MCF 10A (cell line): ENCODE measurements at regions of chr6 and their contacts with region 1.

Region 1: DNA sequence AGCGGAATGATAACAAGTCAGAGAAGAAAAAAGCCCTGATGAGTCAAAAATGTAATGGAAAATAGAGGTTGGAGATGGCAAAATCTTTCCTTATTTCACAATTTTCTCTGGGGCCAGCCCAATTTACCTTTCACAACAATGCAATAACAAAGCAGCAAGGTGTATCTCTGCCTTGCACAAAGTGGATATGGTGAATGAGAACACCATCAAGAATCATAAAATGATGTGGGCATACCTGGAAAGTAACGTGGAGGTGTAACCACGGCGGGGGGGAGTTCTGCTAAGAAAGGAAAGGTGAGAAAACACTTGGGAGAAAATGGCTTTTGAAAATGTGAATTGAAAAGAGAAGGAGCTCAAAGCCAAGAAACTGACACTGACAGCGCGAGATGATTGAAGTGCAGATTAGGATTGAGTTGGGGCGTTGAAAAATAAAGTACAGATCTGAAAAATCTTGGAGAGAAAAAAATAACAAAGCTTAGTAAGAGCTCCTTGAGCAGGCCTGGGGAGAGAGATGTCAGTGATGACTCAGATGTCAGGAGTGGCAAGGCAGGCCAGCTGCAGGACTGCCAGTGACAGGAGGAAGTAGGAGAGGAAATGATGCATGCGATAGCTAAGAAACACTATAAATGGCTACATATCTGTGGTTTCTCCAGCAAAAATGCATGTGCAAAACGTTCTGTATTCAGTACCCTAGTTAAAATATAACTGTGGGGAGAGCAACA is 26.2 kb downstream of the ARHGAP18 start:
- DNase-seq: peak; percentile 94
- H3K4me3 Mint-ChIP-seq: peak overlapping the region; percentile 55
- H3K27ac Mint-ChIP-seq: peak overlapping the region; percentile 65
- H3K4me1 Mint-ChIP-seq: peaks cover 67% of the 10 kb centered on the region
- H3K27me3 Mint-ChIP-seq: no peaks in the 10 kb centered on the region
- CTCF ChIP-seq: no peak

Region 2: DNA sequence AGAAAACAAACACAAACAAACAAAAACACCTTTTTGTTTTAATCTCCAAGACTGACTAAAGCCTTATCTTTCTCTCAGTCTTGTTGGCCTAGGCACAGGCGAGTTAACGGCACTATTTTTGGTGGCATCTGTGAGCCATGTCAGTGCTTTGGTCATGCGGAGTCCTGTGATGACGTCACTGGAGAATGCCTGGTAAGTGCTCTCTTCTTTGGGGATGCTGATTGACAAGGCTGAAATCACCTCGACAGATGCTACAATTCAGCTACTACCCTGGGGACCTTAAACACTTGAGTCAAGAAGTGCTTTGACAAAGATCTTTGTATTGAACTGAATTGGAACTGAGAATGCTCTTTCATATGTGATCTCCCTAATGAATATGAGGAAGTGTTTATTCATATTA is 416.7 kb before region 1 on chr6:
- CTCF ChIA-PET with region 1: no interaction called
- POLR2A ChIA-PET with region 1: no interaction called
- intact Hi-C with region 1: no loop called
- DNase-seq: no peak
- H3K4me3 Mint-ChIP-seq: no peak overlapping the region
- H3K27ac Mint-ChIP-seq: no peak overlapping the region
- H3K4me1 Mint-ChIP-seq: no peaks in the 10 kb centered on the region
- H3K27me3 Mint-ChIP-seq: no peaks in the 10 kb centered on the region
- CTCF ChIP-seq: no peak

Region 3: DNA sequence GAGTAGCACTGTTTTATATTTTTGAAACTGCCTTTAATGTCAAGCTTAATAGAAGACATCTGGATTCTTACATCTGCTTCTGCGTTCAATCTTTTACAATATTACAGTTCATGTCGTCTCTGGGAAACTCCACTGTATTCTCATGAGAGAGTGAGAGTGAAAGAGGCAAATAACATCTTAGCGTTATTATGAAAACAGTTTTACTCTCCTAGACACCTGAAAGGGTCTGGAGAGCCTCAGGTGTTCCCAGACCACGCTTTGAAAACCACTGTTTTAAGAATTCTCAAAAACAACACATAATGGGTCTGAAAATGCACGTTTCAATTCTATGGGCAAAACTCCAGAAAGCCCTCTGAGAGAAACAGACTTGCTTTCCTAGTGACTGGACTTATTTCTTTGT is 37.1 kb before region 1 on chr6:
- CTCF ChIA-PET with region 1: interaction called, 4 read pairs
- POLR2A ChIA-PET with region 1: interaction called, 21 read pairs
- intact Hi-C with region 1: no loop called
- DNase-seq: no peak
- H3K4me3 Mint-ChIP-seq: no peak overlapping the region
- H3K27ac Mint-ChIP-seq: peak overlapping the region; percentile 95
- H3K4me1 Mint-ChIP-seq: peaks cover 36% of the 10 kb centered on the region
- H3K27me3 Mint-ChIP-seq: no peaks in the 10 kb centered on the region
- CTCF ChIP-seq: no peak

Region 4: GRCh38 chr6:129672881-129673643 is 10.7 kb before region 1 on chr6:
- CTCF ChIA-PET with region 1: interaction called, 5 read pairs
- POLR2A ChIA-PET with region 1: interaction called, 35 read pairs
- intact Hi-C with region 1: no loop called
- DNase-seq: peak; percentile 63
- H3K4me3 Mint-ChIP-seq: peak overlapping the region; percentile 14
- H3K27ac Mint-ChIP-seq: peak overlapping the region; percentile 90
- H3K4me1 Mint-ChIP-seq: peaks cover 45% of the 10 kb centered on the region
- H3K27me3 Mint-ChIP-seq: no peaks in the 10 kb centered on the region
- CTCF ChIP-seq: no peak

Region 5: DNA sequence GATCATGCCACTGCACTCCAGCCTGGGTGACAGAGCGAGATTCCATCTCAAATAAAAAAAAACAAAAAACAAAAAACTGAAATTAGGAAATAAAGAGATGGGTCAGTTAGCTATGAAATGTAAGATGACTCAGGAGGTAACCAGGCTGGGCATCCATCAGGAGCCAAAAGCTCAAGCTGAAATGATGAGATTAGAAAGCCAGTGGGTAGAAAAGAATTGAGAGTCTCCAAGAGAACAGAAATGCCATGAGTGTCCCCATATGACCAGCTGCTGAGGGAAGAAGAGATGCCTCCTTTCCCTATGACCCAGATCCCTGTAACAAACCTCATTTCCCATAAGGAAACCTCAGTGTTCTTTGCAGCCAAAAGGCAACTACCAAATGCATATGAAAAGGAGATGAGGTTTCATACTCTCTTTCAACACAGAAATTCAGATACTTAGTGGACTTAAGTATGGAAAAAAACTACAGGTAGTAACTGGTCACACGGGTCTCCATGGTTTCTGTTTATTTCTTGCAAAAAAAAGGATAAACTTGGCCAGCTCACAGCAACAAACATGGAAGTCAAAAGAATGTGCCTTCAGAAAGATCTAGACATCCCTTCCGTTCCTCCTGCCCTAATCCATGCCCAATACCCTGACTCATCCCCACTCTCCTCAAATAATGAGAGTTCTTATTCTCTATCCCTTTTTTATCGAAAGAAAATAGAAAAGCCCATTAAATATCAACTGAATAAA is 18.1 kb after region 1 on chr6:
- CTCF ChIA-PET with region 1: interaction called, 5 read pairs
- POLR2A ChIA-PET with region 1: interaction called, 81 read pairs
- intact Hi-C with region 1: no loop called
- DNase-seq: peak; percentile 34
- H3K4me3 Mint-ChIP-seq: no peak overlapping the region
- H3K27ac Mint-ChIP-seq: peak overlapping the region; percentile 78
- H3K4me1 Mint-ChIP-seq: peaks cover 40% of the 10 kb centered on the region
- H3K27me3 Mint-ChIP-seq: no peaks in the 10 kb centered on the region
- CTCF ChIP-seq: no peak

Region 6: DNA sequence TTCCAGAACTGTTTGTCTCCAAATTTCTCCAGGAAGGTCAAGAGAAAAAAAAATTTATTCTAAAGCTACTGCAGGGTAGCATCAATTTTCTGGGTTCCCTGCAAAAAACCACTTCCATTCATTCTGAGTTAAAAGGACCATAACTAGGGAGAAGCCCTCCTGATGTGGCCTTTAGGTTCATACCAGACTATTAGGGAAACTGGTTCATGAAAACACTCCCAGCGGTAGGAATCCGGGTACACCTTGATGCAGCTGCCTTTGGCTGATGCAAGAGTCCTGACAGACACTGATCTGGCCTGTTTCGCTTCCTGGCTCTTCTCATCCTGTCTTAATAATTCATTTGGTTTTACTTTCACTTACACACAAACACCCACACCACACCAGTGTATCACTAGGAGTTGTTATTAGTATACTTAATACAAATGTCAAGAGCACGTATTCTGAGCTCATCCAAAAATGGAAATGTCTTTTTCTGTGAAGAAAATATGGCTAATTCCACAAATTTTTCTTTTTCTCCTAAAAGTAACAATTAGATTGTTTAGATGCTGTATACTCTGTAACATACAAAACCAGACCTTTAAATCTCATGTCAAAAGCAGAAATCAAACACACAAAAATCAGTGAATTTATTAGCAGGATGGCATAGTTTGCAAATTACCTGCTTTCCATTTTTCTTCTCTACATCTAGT is 64.6 kb after region 1 on chr6:
- CTCF ChIA-PET with region 1: interaction called, 4 read pairs
- POLR2A ChIA-PET with region 1: interaction called, 3 read pairs
- intact Hi-C with region 1: loop called (anchors 5 kb)
- DNase-seq: peak; percentile 93
- H3K4me3 Mint-ChIP-seq: peak overlapping the region; percentile 47
- H3K27ac Mint-ChIP-seq: peak overlapping the region; percentile 87
- H3K4me1 Mint-ChIP-seq: peaks cover 36% of the 10 kb centered on the region
- H3K27me3 Mint-ChIP-seq: no peaks in the 10 kb centered on the region
- CTCF ChIP-seq: peak; percentile 28